ENCODE measurements at regions of chr18 and their contacts with region 1.

Region 1: DNA sequence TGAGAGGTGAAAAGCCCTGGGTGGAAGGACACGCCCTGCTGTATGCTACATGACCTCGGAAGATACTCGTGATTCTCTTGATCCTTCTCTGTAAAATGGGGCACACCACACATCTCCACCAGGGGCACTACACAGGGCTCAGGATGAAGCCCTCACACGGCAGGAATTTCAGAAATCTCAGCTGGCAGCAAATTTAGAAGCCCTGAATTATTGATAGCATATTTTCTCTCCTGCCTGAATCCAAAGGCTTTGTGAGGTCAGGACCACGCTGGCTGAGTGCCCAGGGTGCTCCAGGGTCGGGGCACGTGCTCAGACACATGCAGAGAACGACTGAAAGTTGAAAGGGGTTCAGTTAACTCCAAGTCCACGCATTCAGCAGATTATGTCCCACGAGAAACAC is 42.1 kb upstream of the GALR1 start:
- DNase-seq: peak; percentile 70
- H3K4me3 Mint-ChIP-seq: peak overlapping the region; percentile 19
- H3K27ac Mint-ChIP-seq: peak overlapping the region; percentile 26
- H3K4me1 Mint-ChIP-seq: peaks cover 39% of the 10 kb centered on the region
- H3K27me3 Mint-ChIP-seq: no peaks in the 10 kb centered on the region

Region 2: DNA sequence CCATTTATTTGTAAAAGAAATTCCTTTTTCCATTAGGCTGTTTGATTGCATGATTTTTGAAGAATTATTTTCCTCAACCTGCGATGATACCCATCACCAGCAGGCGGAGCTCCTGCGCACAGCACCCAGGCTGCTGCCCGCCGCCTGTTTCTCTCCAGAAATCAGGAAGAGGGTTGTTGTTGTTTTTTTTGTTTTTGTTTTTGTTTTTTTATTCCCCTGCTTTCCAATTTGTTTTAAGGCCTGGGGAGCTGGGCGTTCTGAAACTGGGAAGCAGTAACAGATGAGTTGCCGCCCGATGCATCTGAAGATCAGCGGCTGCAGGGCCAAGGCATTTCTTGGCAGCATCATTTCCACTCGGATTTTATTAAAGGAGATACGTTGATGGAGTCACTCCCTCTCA is 207.0 kb before region 1 on chr18:
- intact Hi-C with region 1: loop called (anchors 1 kb)
- DNase-seq: peak; percentile 83
- H3K4me3 Mint-ChIP-seq: no peak overlapping the region
- H3K27ac Mint-ChIP-seq: no peak overlapping the region
- H3K4me1 Mint-ChIP-seq: peaks cover 31% of the 10 kb centered on the region
- H3K27me3 Mint-ChIP-seq: peaks cover 4% of the 10 kb centered on the region

Region 3: GRCh38 chr18:77067291-77068061 is 140.1 kb before region 1 on chr18:
- intact Hi-C with region 1: loop called (anchors 2 kb)
- DNase-seq: peak; percentile 91
- H3K4me3 Mint-ChIP-seq: peak overlapping the region; percentile 66
- H3K27ac Mint-ChIP-seq: peak overlapping the region; percentile 97
- H3K4me1 Mint-ChIP-seq: peaks cover 99% of the 10 kb centered on the region
- H3K27me3 Mint-ChIP-seq: no peaks in the 10 kb centered on the region

Region 4: GRCh38 chr18:77132371-77133050 is 75.0 kb before region 1 on chr18 and contains the start of gene MBP:
- intact Hi-C with region 1: loop called (anchors 2 kb)
- DNase-seq: peak; percentile 92
- H3K4me3 Mint-ChIP-seq: peak within 1 kb of the TSS; percentile 100
- H3K27ac Mint-ChIP-seq: peak within 1 kb of the TSS; percentile 97
- H3K4me1 Mint-ChIP-seq: peaks cover 47% of the 10 kb centered on the region
- H3K27me3 Mint-ChIP-seq: no peaks in the 10 kb centered on the region
- total RNA-seq, gene MBP: 60.2 and 63.1 TPM in 2 replicates

Region 5: GRCh38 chr18:77151772-77152520 is 55.6 kb before region 1 on chr18:
- intact Hi-C with region 1: loop called (anchors 5 kb)
- DNase-seq: no peak
- H3K4me3 Mint-ChIP-seq: no peak overlapping the region
- H3K27ac Mint-ChIP-seq: no peak overlapping the region
- H3K4me1 Mint-ChIP-seq: peaks cover 18% of the 10 kb centered on the region
- H3K27me3 Mint-ChIP-seq: peaks cover 3% of the 10 kb centered on the region

Region 6: GRCh38 chr18:77234504-77235365 is 27.2 kb after region 1 on chr18:
- intact Hi-C with region 1: no loop called
- DNase-seq: no peak
- H3K4me3 Mint-ChIP-seq: no peak overlapping the region
- H3K27ac Mint-ChIP-seq: no peak overlapping the region
- H3K4me1 Mint-ChIP-seq: no peaks in the 10 kb centered on the region
- H3K27me3 Mint-ChIP-seq: peaks cover 18% of the 10 kb centered on the region

Region 7: DNA sequence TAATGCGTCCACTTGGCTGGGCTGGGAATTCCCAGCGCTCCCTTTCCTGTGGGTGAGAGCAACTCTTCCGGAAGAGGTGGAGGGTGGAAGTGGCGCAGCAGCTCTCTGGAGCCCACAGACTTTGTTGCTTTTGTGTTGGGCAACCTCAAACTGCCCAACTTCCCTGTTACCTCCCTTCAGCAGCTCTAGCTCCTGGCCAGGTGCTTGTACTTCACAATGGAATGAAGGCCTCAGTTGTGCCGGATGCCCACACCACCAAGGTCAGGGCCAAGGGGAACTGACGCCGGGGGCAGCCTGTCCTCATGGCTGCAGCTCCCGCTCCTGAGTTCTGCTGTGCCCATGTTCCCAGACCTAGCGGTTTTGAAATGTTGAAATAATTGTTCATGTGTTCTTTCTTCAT is 365.0 kb after region 1 on chr18:
- intact Hi-C with region 1: no loop called
- DNase-seq: no peak
- H3K4me3 Mint-ChIP-seq: no peak overlapping the region
- H3K27ac Mint-ChIP-seq: no peak overlapping the region
- H3K4me1 Mint-ChIP-seq: no peaks in the 10 kb centered on the region
- H3K27me3 Mint-ChIP-seq: no peaks in the 10 kb centered on the region